Heart right ventricle (tissue), 16 donors: ENCODE measurements at regions of chr2 and their contacts with region 1.

Region 1: GRCh38 chr2:218395797-218396687 is 3.6 kb upstream of the CTDSP1 start:
- DNase-seq: peak; percentile 95
- ATAC-seq: peak; percentile 67 to 83 (median 76)
- H3K4me3 ChIP-seq: peak overlapping the region; percentile 45 to 100 (median 98)
- H3K27ac ChIP-seq: peak overlapping the region; percentile 98 to 100 (median 100)
- H3K4me1 ChIP-seq: peaks cover under 1 to 51% (median 28%) of the 10 kb centered on the region in 9 donors
- H3K27me3 ChIP-seq: no peaks in the 10 kb centered on the region
- CTCF ChIP-seq: peak; percentile 83 to 99 (median 95)

Region 2: GRCh38 chr2:218286570-218287459 is 109.2 kb before region 1 on chr2:
- intact Hi-C with region 1: loop called in 7 of 10 experiments (anchors 1 to 10 kb)
- DNase-seq: peak; percentile 84 to 96
- ATAC-seq: peak; percentile 83 to 92 (median 86)
- H3K4me3 ChIP-seq: peak overlapping the region; percentile 4 to 65 (median 49)
- H3K27ac ChIP-seq: peak overlapping the region; percentile 92 to 100 (median 98)
- H3K4me1 ChIP-seq: peaks cover 56 to 99% (median 97%) of the 10 kb centered on the region in 9 donors
- H3K27me3 ChIP-seq: no peaks in the 10 kb centered on the region
- CTCF ChIP-seq: no peak

Region 3: GRCh38 chr2:218292048-218293014 is 103.7 kb before region 1 on chr2 and contains the start of gene TMBIM1:
- intact Hi-C with region 1: loop called in 7 of 10 experiments (anchors 1 to 10 kb)
- DNase-seq: peak; percentile 74 to 85
- ATAC-seq: peak; percentile 83 to 96 (median 88)
- H3K4me3 ChIP-seq: peak within 1 kb of the TSS; percentile 71 to 99 (median 92)
- H3K27ac ChIP-seq: peak within 1 kb of the TSS; percentile 95 to 100 (median 98)
- H3K4me1 ChIP-seq: peaks cover 16 to 72% (median 48%) of the 10 kb centered on the region in 9 donors
- H3K27me3 ChIP-seq: no peaks in the 10 kb centered on the region
- CTCF ChIP-seq: peak; percentile 76 to 99 (median 96)
- total RNA-seq, gene TMBIM1: 85.3 to 151 (median 110) TPM

Region 4: GRCh38 chr2:218301176-218301819 is 94.7 kb before region 1 on chr2:
- intact Hi-C with region 1: loop called in 5 of 10 experiments (anchors 2 to 10 kb)
- DNase-seq: peak; percentile 64 to 89
- ATAC-seq: peak; percentile 68 to 90 (median 82)
- H3K4me3 ChIP-seq: no peak overlapping the region
- H3K27ac ChIP-seq: peak overlapping the region in 1 of 10 donors; percentile 23
- H3K4me1 ChIP-seq: peaks cover 0 to 7% (median 0%) of the 10 kb centered on the region in 9 donors
- H3K27me3 ChIP-seq: no peaks in the 10 kb centered on the region
- CTCF ChIP-seq: peak; percentile 96 to 100 (median 97)

Region 5: GRCh38 chr2:218367415-218368153 is 28.5 kb before region 1 on chr2:
- intact Hi-C with region 1: loop called in 1 of 10 experiments (anchors 2 kb)
- DNase-seq: peak; percentile 92 to 93
- ATAC-seq: peak; percentile 95 to 98 (median 97)
- H3K4me3 ChIP-seq: peak overlapping the region; percentile 31 to 67 (median 58)
- H3K27ac ChIP-seq: peak overlapping the region; percentile 87 to 99 (median 94)
- H3K4me1 ChIP-seq: peaks cover 0 to 76% (median 13%) of the 10 kb centered on the region in 9 donors
- H3K27me3 ChIP-seq: no peaks in the 10 kb centered on the region
- CTCF ChIP-seq: peak in 3 of 9 donors; percentile 26 to 34 (median 30)

Region 6: DNA sequence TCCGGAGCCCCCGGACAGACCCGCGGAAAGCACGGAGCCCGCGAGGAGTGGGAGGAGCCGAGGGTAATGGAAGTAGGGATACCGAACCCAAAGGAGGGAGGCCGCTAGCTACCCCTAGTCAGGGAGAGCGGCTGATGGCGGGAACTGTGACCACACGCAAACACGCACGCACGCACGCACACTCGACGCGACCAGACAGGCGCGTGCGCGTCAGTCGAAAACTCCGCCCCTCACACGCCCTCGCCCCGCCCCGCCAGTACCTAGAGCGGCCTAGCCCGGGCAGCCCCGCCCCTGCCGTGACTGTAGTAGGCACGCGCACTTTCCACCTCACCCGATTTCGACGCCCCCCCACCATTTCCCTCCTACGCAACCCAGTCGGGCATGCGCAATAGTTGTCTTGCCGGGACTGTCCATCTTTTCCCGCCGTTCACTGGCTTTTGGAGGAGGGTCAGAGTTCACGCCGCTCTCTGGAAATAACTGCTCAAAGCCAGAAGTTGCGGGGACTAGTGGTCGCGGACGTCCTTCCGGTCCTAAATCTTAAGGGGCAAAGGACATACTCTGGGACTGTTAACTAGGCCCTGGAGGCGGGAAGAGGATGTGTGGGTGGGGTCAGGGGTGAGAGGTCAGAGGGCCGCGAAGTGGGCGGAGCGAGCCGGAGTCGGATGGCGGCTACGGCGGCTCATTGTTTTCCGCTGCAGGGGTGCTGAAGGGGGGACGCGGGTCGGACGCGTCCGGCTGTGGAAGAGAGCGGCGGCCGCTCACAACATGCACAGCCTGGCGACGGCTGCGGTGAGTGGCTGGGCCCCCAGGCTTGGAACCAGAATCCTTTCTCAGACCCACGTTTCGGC is 172.4 kb after region 1 on chr2 and contains the starts of genes CNOT9 and USP37:
- intact Hi-C with region 1: loop called in 1 of 10 experiments (anchors 5 kb)
- DNase-seq: peak; percentile 100
- ATAC-seq: peak; percentile 97 to 99 (median 98)
- H3K4me3 ChIP-seq: peak within 1 kb of the TSS; percentile 61 to 96 (median 84)
- H3K27ac ChIP-seq: peak within 1 kb of the TSS; percentile 68 to 97 (median 94)
- H3K4me1 ChIP-seq: peaks cover 8 to 49% (median 45%) of the 10 kb centered on the region in 9 donors
- H3K27me3 ChIP-seq: no peaks in the 10 kb centered on the region
- CTCF ChIP-seq: no peak
- total RNA-seq, gene CNOT9: 15.7 to 28.2 (median 21.1) TPM
- total RNA-seq, gene USP37: 6.3 to 11.1 (median 8.5) TPM